ENCODE measurements at regions of chr6 and their contacts with region 1.

Region 1: GRCh38 chr6:160088069-160088783 is 33.4 kb upstream of the SLC22A1 start:
- DNase-seq: peak in 1 of 2 experiments; percentile 69
- H3K4me3 ChIP-seq: no peak overlapping the region
- H3K27ac ChIP-seq: no peak overlapping the region
- H3K4me1 ChIP-seq: no peaks in the 10 kb centered on the region
- H3K27me3 ChIP-seq: no peaks in the 10 kb centered on the region
- CTCF ChIP-seq: peak; percentile 72 to 80 (median 76)
- EP300 ChIP-seq: no peak
- POLR2A ChIP-seq: no peak
- RAD21 ChIP-seq: peak; percentile 72 to 75

Region 2: DNA sequence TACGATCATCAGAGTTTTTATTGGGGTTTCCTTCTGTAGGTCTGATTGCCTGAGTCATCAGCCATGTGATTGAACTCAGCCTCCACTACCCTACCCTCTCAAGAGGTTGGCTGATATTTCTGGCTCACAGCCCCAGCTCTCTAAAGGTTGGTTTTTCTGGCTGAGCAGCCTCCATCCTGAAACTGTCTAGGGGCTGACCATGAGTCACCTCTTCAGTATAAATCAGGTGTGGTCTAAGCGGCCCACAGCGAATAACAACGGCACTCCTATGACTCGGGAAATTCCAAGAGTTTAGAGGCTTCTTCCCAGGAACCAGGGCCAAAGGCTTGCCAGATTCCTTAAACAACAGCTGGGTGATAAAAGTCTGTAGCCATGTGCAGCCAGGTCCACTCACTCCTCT is 510.7 kb before region 1 on chr6:
- CTCF ChIA-PET with region 1: no interaction called
- POLR2A ChIA-PET with region 1: no interaction called
- DNase-seq: peak in 1 of 2 experiments; percentile 7
- H3K4me3 ChIP-seq: no peak overlapping the region
- H3K27ac ChIP-seq: no peak overlapping the region
- H3K4me1 ChIP-seq: no peaks in the 10 kb centered on the region
- H3K27me3 ChIP-seq: no peaks in the 10 kb centered on the region
- CTCF ChIP-seq: no peak
- EP300 ChIP-seq: no peak
- POLR2A ChIP-seq: no peak
- RAD21 ChIP-seq: no peak

Region 3: GRCh38 chr6:160071800-160072690 is 16.2 kb before region 1 on chr6:
- CTCF ChIA-PET with region 1: interaction called, 22 read pairs
- POLR2A ChIA-PET with region 1: interaction called, 3 read pairs
- DNase-seq: peak in 1 of 2 experiments; percentile 50
- H3K4me3 ChIP-seq: no peak overlapping the region
- H3K27ac ChIP-seq: no peak overlapping the region
- H3K4me1 ChIP-seq: no peaks in the 10 kb centered on the region
- H3K27me3 ChIP-seq: no peaks in the 10 kb centered on the region
- CTCF ChIP-seq: peak; percentile 35 to 54 (median 51)
- EP300 ChIP-seq: no peak
- POLR2A ChIP-seq: no peak
- RAD21 ChIP-seq: peak; percentile 29 to 48; a peak in 3 of 4 replicates

Region 4: DNA sequence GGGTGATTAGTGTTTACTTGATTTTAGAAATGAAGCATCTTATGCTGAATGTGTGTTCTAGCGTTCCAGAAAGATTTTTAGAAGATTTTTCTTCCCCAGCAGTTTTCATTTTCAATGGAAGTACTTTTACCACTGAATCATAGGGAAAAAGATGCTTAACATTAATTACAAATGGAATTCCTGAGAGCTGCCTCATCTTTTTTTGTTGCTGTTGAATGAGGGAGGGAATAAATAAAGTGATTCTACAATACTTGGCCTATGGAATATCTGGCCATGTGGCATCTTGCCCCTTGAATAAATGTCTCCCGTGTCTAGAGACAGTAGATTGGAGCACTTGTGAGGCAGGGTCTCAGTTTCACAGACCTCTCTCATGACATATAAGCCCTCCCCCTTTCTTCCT is 10.7 kb before region 1 on chr6:
- CTCF ChIA-PET with region 1: interaction called, 22 read pairs
- POLR2A ChIA-PET with region 1: interaction called, 3 read pairs
- DNase-seq: no peak
- H3K4me3 ChIP-seq: no peak overlapping the region
- H3K27ac ChIP-seq: no peak overlapping the region
- H3K4me1 ChIP-seq: no peaks in the 10 kb centered on the region
- H3K27me3 ChIP-seq: no peaks in the 10 kb centered on the region
- CTCF ChIP-seq: no peak
- EP300 ChIP-seq: no peak
- POLR2A ChIP-seq: no peak
- RAD21 ChIP-seq: no peak

Region 5: GRCh38 chr6:160163425-160163824 is 75.2 kb after region 1 on chr6:
- CTCF ChIA-PET with region 1: no interaction called
- POLR2A ChIA-PET with region 1: no interaction called
- DNase-seq: no peak
- H3K4me3 ChIP-seq: no peak overlapping the region
- H3K27ac ChIP-seq: no peak overlapping the region
- H3K4me1 ChIP-seq: peaks cover 0 to 6% (median 3%) of the 10 kb centered on the region in 4 experiments; a peak in 5 of 7 replicates
- H3K27me3 ChIP-seq: no peaks in the 10 kb centered on the region
- CTCF ChIP-seq: no peak
- EP300 ChIP-seq: no peak
- POLR2A ChIP-seq: no peak
- RAD21 ChIP-seq: no peak

Region 6: GRCh38 chr6:160305926-160306713 is 217.9 kb after region 1 on chr6:
- CTCF ChIA-PET with region 1: no interaction called
- POLR2A ChIA-PET with region 1: no interaction called
- DNase-seq: no peak
- H3K4me3 ChIP-seq: no peak overlapping the region
- H3K27ac ChIP-seq: no peak overlapping the region
- H3K4me1 ChIP-seq: no peaks in the 10 kb centered on the region
- H3K27me3 ChIP-seq: no peaks in the 10 kb centered on the region
- CTCF ChIP-seq: no peak
- EP300 ChIP-seq: no peak
- POLR2A ChIP-seq: no peak
- RAD21 ChIP-seq: no peak